HEK293 (cell line): ENCODE measurements at regions of chr6 and their contacts with region 1.

Region 1: GRCh38 chr6:31834434-31835198 is 7.1 kb downstream of the HSPA1B start:
- H3K4me3 ChIP-seq: peak overlapping the region; percentile 79
- H3K27ac ChIP-seq: peak overlapping the region; percentile 88
- H3K4me1 ChIP-seq: peaks cover 9% of the 10 kb centered on the region
- CTCF ChIP-seq: 0 out of 2 replicates have a peak, but pooled peaks have one; percentile 41

Region 2: GRCh38 chr6:31559958-31560696 is 274.5 kb before region 1 on chr6:
- CTCF ChIA-PET with region 1: no interaction called
- POLR2A ChIA-PET with region 1: no interaction called
- H3K4me3 ChIP-seq: no peak overlapping the region
- H3K27ac ChIP-seq: no peak overlapping the region
- H3K4me1 ChIP-seq: no peaks in the 10 kb centered on the region
- CTCF ChIP-seq: no peak

Region 3: DNA sequence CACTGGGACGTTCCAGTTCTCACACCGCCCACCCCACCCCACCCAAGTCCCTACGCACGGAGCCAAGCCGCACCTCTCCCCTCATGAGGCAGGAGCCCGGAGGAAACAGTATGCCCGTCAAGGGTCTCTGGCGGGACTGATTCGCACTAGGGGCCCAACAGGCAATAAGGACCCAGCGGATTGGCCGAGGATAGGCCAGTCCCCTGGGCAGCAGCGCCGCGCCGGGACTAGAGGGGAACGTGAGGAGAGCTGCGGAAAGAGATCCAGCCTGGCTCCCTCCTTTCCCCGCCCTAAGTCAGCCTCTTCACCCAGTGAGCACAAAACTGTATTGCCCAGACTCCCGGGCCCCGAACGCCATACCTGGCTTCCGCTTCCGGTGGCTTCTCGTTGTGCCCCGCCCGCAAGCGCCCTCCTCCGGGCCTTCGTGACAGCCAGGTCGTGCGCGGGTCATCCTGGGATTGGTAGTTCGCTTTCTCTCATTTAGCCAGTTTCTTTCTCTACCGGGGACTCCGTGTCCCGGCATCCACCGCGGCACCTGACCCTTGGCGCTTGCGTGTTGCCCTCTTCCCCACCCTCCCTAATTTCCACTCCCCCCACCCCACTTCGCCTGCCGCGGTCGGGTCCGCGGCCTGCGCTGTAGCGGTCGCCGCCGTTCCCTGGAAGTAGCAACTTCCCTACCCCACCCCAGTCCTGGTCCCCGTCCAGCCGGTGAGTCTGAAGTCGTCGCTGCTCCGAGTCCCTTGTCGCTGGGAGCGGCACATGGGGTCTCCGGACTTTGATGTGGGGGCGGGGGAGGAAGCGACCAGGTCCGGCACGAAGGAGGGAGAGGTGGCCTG is 168.9 kb before region 1 on chr6 and contains the start of gene CSNK2B:
- CTCF ChIA-PET with region 1: no interaction called
- POLR2A ChIA-PET with region 1: interaction called, 11 read pairs
- H3K4me3 ChIP-seq: peak within 1 kb of the TSS; percentile 92
- H3K27ac ChIP-seq: peak within 1 kb of the TSS; percentile 92
- H3K4me1 ChIP-seq: peaks cover 6% of the 10 kb centered on the region; the same call in 1 of the 2 replicates
- CTCF ChIP-seq: peak; percentile 75

Region 4: DNA sequence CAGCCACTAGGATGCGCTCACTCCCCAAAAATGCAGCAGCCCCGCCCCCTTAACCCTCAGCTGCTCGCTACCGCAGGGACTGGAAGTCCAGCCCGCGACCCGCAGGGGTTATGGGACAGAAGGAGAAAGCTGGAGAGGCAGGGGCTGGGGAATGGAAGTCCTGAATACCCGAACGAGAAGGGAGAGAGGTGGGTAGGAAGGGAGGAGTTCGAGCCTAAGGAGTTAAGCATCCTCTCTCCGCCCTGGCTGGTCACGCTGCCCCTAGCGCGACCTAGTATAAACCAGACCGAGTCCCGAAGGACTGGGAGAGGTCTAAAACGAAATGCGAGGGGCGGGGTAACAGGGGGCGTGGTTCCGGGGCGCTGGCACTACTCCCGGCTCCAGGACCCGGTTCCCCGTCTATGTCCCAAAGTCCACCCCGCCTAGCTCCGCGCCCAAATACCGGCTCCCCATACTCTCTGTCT is 105.1 kb before region 1 on chr6:
- CTCF ChIA-PET with region 1: interaction called, 9 read pairs
- POLR2A ChIA-PET with region 1: interaction called, 13 read pairs
- H3K4me3 ChIP-seq: peak overlapping the region; percentile 74
- H3K27ac ChIP-seq: peak overlapping the region; percentile 67; the same call in 1 of the 2 replicates
- H3K4me1 ChIP-seq: peaks cover 3% of the 10 kb centered on the region
- CTCF ChIP-seq: peak; percentile 94

Region 5: GRCh38 chr6:31795616-31796298 is 38.9 kb before region 1 on chr6 and contains the start of gene VARS1:
- CTCF ChIA-PET with region 1: interaction called, 15 read pairs
- POLR2A ChIA-PET with region 1: interaction called, 25 read pairs
- H3K4me3 ChIP-seq: peak within 1 kb of the TSS; percentile 81
- H3K27ac ChIP-seq: peak within 1 kb of the TSS; percentile 93
- H3K4me1 ChIP-seq: no peaks in the 10 kb centered on the region; the same call in 1 of the 2 replicates
- CTCF ChIP-seq: peak; percentile 100

Region 6: GRCh38 chr6:31901953-31902643 is 67.5 kb after region 1 on chr6 and contains the start of gene ZBTB12:
- CTCF ChIA-PET with region 1: interaction called, 3 read pairs
- POLR2A ChIA-PET with region 1: interaction called, 15 read pairs
- H3K4me3 ChIP-seq: peak within 1 kb of the TSS; percentile 62
- H3K27ac ChIP-seq: peak within 1 kb of the TSS; percentile 9
- H3K4me1 ChIP-seq: peaks cover 9% of the 10 kb centered on the region
- CTCF ChIP-seq: peak; percentile 57; the same call in 1 of the 2 replicates

Region 7: GRCh38 chr6:32337186-32337805 is 502.7 kb after region 1 on chr6:
- CTCF ChIA-PET with region 1: no interaction called
- POLR2A ChIA-PET with region 1: no interaction called
- H3K4me3 ChIP-seq: no peak overlapping the region
- H3K27ac ChIP-seq: no peak overlapping the region
- H3K4me1 ChIP-seq: no peaks in the 10 kb centered on the region
- CTCF ChIP-seq: no peak

Region 8: GRCh38 chr6:32589598-32590449 is 755.2 kb after region 1 on chr6 and contains the start of gene HLA-DRB1:
- CTCF ChIA-PET with region 1: no interaction called
- POLR2A ChIA-PET with region 1: no interaction called
- H3K4me3 ChIP-seq: no peak within 1 kb of the TSS
- H3K27ac ChIP-seq: no peak within 1 kb of the TSS
- H3K4me1 ChIP-seq: no peaks in the 10 kb centered on the region
- CTCF ChIP-seq: no peak